ENCODE measurements at regions of chr2 and their contacts with region 1.

Region 1: GRCh38 chr2:173210270-173211196 is 134.9 kb downstream of the MAP3K20 start:
- DNase-seq: peak in 7 of 9 donors; percentile 10 to 59 (median 39)
- ATAC-seq: peak; percentile 88
- H3K4me3 ChIP-seq: no peak overlapping the region
- H3K4me3 Mint-ChIP-seq: no peak overlapping the region
- H3K27ac ChIP-seq: no peak overlapping the region
- H3K27ac Mint-ChIP-seq: no peak overlapping the region
- H3K4me1 ChIP-seq: no peaks in the 10 kb centered on the region
- H3K4me1 Mint-ChIP-seq: peaks cover 0 to 2% (median 0%) of the 10 kb centered on the region in 7 donors
- H3K27me3 ChIP-seq: no peaks in the 10 kb centered on the region
- H3K27me3 Mint-ChIP-seq: peaks cover 2 to 21% (median 14%) of the 10 kb centered on the region in 5 donors

Region 2: DNA sequence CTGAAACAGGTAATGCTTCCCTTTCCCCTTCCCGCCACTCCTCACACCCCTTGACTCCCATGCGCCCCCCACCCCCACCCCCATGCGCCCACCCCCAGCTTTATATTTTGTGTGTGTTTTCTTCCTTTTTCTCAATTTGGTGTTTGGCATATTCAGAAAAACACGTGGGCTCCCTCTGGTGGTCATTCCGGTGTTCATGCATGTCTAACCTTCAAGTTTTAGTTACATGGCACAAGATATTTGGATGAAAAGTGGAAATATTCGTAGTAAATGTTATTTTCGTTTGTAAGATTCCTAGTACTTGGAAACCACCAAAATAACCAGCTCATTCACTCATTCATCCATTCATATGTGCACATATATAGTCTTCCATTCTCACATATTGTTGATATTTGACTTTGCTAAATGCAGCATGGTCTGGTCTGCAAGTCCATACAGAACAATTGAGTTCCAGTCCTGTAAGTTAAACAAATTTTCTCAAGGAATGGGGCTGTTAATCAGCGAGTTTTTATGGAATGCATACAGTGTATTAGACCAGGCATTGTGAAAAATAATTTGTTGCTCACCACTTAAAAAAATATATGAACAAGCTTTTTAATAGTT is 278.5 kb before region 1 on chr2:
- CTCF ChIA-PET with region 1: no interaction called
- POLR2A ChIA-PET with region 1: no interaction called
- intact Hi-C with region 1: loop called in 1 of 2 experiments (anchors 2 kb)
- DNase-seq: peak; percentile 16 to 73 (median 61)
- ATAC-seq: peak; percentile 61
- H3K4me3 ChIP-seq: no peak overlapping the region
- H3K4me3 Mint-ChIP-seq: peak overlapping the region in 6 of 10 donors; percentile 5 to 73 (median 44)
- H3K27ac ChIP-seq: no peak overlapping the region
- H3K27ac Mint-ChIP-seq: no peak overlapping the region
- H3K4me1 ChIP-seq: peaks cover 0 to 6% of the 10 kb centered on the region in 2 donors
- H3K4me1 Mint-ChIP-seq: peaks cover 4 to 19% (median 11%) of the 10 kb centered on the region in 7 donors
- H3K27me3 ChIP-seq: no peaks in the 10 kb centered on the region
- H3K27me3 Mint-ChIP-seq: peaks cover 0 to 17% (median 4%) of the 10 kb centered on the region in 5 donors

Region 3: GRCh38 chr2:172977270-172978062 is 233.1 kb before region 1 on chr2:
- CTCF ChIA-PET with region 1: interaction called, 7 read pairs
- POLR2A ChIA-PET with region 1: no interaction called
- intact Hi-C with region 1: loop called in 1 of 2 experiments (anchors 1 kb)
- DNase-seq: peak in 1 of 9 donors; percentile 18
- ATAC-seq: no peak
- H3K4me3 ChIP-seq: no peak overlapping the region
- H3K4me3 Mint-ChIP-seq: no peak overlapping the region
- H3K27ac ChIP-seq: no peak overlapping the region
- H3K27ac Mint-ChIP-seq: peak overlapping the region in 2 of 9 donors; percentile 44 to 83
- H3K4me1 ChIP-seq: no peaks in the 10 kb centered on the region
- H3K4me1 Mint-ChIP-seq: peaks cover 0 to 3% (median 0%) of the 10 kb centered on the region in 7 donors
- H3K27me3 ChIP-seq: no peaks in the 10 kb centered on the region
- H3K27me3 Mint-ChIP-seq: peaks cover 7 to 20% (median 12%) of the 10 kb centered on the region in 5 donors

Region 4: GRCh38 chr2:173075781-173076580 is 134.6 kb before region 1 on chr2 and contains the start of gene MAP3K20:
- CTCF ChIA-PET with region 1: no interaction called
- POLR2A ChIA-PET with region 1: no interaction called
- intact Hi-C with region 1: loop called in 1 of 2 experiments (anchors 1 kb)
- DNase-seq: peak in 6 of 9 donors; percentile 13 to 73 (median 27)
- ATAC-seq: peak; percentile 84
- H3K4me3 ChIP-seq: peak within 1 kb of the TSS; percentile 45
- H3K4me3 Mint-ChIP-seq: peak within 1 kb of the TSS; percentile 56 to 89 (median 80)
- H3K27ac ChIP-seq: no peak within 1 kb of the TSS
- H3K27ac Mint-ChIP-seq: peak within 1 kb of the TSS in 2 of 9 donors; percentile 23 to 72
- H3K4me1 ChIP-seq: peaks cover 0 to 10% of the 10 kb centered on the region in 2 donors
- H3K4me1 Mint-ChIP-seq: peaks cover 6 to 25% (median 15%) of the 10 kb centered on the region in 7 donors
- H3K27me3 ChIP-seq: no peaks in the 10 kb centered on the region
- H3K27me3 Mint-ChIP-seq: peaks cover 30 to 57% (median 39%) of the 10 kb centered on the region in 5 donors
- total RNA-seq, gene MAP3K20: 0.30 to 17.0 (median 2.6) TPM

Region 5: DNA sequence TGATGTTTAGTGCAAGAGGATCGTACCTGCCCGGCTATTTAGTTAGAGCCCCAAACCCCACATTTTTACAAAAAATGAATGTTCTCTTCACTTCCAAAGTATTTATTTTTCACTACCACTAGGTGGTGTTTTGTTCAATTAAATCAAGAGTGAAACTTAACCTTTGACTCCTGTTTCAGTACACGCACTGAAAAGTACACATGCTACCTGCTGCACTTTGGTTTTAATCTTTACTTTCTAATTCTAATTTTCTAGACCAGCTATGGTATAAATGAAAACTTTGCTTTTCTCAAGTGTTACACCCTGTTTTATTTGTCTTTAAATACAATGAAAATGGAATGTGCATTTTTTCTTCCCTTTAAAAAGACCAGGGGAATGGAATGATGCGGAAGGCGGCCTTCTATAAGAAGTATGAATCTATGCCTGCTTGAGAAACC is 1826.1 kb after region 1 on chr2:
- CTCF ChIA-PET with region 1: interaction called, 11 read pairs
- POLR2A ChIA-PET with region 1: no interaction called
- intact Hi-C with region 1: no loop called
- DNase-seq: peak in 6 of 9 donors; percentile 22 to 56 (median 44)
- ATAC-seq: peak; percentile 81
- H3K4me3 ChIP-seq: no peak overlapping the region
- H3K4me3 Mint-ChIP-seq: peak overlapping the region in 9 of 10 donors; percentile 42 to 79 (median 70)
- H3K27ac ChIP-seq: no peak overlapping the region
- H3K27ac Mint-ChIP-seq: peak overlapping the region in 8 of 9 donors; percentile 49 to 91 (median 70)
- H3K4me1 ChIP-seq: no peaks in the 10 kb centered on the region
- H3K4me1 Mint-ChIP-seq: peaks cover 4 to 20% (median 14%) of the 10 kb centered on the region in 7 donors
- H3K27me3 ChIP-seq: no peaks in the 10 kb centered on the region
- H3K27me3 Mint-ChIP-seq: peaks cover 0 to 2% (median 0%) of the 10 kb centered on the region in 5 donors

Measured in naive thymus-derived CD4-positive, alpha-beta T cell (primary cell).